BJ (cell line): ENCODE measurements at regions of chr1 and their contacts with region 1.

Region 1: GRCh38 chr1:109493805-109494539 is at the start of gene CYB561D1:
- DNase-seq: no peak
- H3K4me3 ChIP-seq: peak within 1 kb of the TSS; percentile 83
- H3K27me3 ChIP-seq: no peaks in the 10 kb centered on the region
- CTCF ChIP-seq: peak; percentile 87
- polyA plus RNA-seq, gene CYB561D1: 8.2 and 10.8 TPM in 2 replicates

Region 2: DNA sequence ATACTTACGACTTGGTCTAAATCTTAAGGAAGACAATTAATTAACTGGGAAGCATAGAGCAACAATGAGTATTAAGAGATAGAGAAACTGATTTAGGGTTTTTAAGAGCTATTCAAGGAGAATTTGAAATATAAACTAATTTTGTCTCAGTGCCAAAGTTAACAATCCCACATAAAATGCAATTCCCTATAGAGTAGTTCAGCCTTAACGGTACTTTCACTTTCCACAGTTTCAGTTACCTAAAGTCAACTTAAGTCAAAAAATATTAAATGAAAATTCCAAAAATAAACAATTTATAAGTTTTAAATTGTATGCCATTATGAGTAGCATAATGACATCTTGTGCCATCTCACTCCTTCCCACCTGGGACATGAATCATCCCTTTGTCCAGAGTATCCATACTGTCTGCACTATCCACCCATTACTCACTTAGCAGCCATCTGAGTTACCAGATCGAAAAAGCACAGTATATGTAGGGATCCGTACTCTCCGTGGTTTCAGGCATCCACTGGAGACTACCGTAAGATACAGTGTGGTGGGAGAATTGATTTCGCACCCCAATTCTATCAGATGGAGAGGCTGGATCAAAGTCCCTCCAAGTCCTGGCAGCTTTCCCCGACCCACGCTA is 285.0 kb before region 1 on chr1:
- CTCF ChIA-PET with region 1: no interaction called
- POLR2A ChIA-PET with region 1: no interaction called
- DNase-seq: no peak
- H3K4me3 ChIP-seq: no peak overlapping the region
- H3K27me3 ChIP-seq: no peaks in the 10 kb centered on the region
- CTCF ChIP-seq: no peak

Region 3: GRCh38 chr1:109426278-109427170 is 67.4 kb before region 1 on chr1 and contains the start of gene PSMA5:
- CTCF ChIA-PET with region 1: interaction called, 17 read pairs
- POLR2A ChIA-PET with region 1: interaction called, 26 read pairs
- DNase-seq: peak; percentile 98
- H3K4me3 ChIP-seq: peak within 1 kb of the TSS; percentile 77
- H3K27me3 ChIP-seq: no peaks in the 10 kb centered on the region
- CTCF ChIP-seq: no peak
- polyA plus RNA-seq, gene PSMA5: 151 and 226 TPM in 2 replicates

Region 4: DNA sequence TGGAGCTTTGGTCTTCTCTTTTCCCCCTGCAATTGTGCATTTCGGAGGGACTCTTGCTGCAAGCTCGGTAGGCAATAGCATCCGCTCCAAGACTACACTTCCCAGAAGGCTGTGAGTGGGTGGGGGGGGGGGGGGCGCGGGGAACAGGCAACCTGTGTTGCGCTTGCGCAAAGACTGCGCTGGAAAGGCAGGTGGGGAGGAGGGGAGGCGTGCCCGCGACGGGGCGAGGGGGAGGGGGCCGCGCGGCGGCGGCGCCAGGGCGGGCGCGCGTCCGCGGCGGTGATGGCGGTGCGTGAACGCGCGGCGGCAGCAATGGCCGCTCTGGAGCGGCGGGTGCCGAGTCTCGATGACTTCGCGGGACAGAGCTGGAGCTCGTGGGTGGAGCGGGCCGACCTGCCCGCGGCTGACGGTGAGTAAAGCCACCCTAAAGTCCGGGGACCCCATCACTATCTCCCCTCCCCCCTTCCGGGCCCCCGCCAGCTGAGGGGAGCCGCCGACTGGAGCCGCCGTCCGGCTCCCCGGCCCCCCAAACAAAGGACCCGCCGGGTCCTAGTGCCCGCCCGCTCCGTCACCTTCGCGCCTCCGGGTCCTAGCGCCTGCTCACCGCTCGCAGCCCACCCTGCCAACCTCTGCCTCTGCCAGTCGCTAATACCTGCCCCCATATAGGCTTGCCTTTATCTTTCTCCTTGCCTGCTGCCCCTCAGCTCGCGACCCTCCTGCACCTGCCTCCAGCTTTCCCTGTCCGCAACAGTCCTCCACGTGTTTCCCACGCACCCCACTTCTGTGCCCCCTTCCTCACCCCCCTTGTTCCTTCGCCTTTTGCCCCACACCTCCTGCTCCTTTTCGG is 10.1 kb before region 1 on chr1 and contains the start of gene ATXN7L2:
- CTCF ChIA-PET with region 1: interaction called, 33 read pairs
- POLR2A ChIA-PET with region 1: no interaction called
- DNase-seq: peak; percentile 47
- H3K4me3 ChIP-seq: peak within 1 kb of the TSS; percentile 65
- H3K27me3 ChIP-seq: no peaks in the 10 kb centered on the region
- CTCF ChIP-seq: no peak
- polyA plus RNA-seq, gene ATXN7L2: 5.7 and 8.7 TPM in 2 replicates

Region 5: DNA sequence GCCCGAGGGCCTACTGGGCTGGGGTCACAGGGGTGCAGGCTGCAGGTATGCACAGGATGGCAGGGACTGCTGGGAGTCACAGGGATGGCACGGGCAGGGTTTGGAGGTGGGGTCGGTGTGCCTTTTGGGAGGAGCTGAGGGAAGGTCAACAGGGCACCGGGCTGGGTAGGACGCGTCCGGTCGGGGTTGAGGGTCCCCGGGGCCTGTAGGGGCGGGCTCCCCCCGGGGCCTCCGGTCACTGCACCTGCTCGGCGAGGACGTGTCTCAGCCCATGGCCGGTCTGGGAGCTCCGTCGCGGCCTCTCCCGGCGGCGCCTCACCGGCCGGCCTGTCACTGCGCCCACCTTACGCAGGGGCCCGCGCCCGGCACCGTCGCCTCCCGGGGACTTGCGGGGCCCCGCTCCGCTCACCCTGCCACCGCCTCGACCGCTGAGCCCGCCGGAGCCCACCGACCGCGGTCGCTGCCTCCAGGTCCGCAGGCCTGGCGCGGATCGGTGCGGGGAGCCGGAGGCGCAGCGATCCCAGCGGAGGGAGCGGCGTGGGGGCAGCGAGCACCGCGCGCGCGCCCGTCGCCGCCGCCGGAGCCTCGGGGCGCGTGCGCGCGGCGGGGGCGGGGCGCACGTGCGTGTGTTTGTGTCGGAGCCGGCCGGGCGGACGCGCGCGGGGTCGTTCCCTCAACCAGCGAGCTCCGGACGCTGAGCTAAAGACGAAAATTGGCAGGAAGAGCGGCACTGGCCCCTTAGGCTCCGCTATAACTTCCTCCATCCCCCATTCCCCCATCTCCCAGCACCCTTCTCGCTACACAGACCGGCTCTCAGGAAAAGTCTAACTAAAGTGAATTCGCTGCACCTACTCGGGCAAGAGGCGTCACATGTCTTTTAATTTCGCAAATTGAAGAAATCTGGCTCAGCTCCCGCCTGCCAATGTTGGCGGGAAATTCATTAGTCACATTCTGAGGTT is 15.5 kb after region 1 on chr1 and contains the start of gene AMIGO1:
- CTCF ChIA-PET with region 1: interaction called, 42 read pairs
- POLR2A ChIA-PET with region 1: interaction called, 3 read pairs
- DNase-seq: no peak
- H3K4me3 ChIP-seq: peak within 1 kb of the TSS; percentile 60
- H3K27me3 ChIP-seq: no peaks in the 10 kb centered on the region
- CTCF ChIP-seq: no peak
- polyA plus RNA-seq, gene AMIGO1: 2.9 and 3.4 TPM in 2 replicates

Region 6: GRCh38 chr1:109516872-109517271 is 22.9 kb after region 1 on chr1:
- CTCF ChIA-PET with region 1: interaction called, 1,371 read pairs
- POLR2A ChIA-PET with region 1: no interaction called
- DNase-seq: peak; percentile 75
- H3K4me3 ChIP-seq: no peak overlapping the region
- H3K27me3 ChIP-seq: no peaks in the 10 kb centered on the region
- CTCF ChIP-seq: no peak

Region 7: DNA sequence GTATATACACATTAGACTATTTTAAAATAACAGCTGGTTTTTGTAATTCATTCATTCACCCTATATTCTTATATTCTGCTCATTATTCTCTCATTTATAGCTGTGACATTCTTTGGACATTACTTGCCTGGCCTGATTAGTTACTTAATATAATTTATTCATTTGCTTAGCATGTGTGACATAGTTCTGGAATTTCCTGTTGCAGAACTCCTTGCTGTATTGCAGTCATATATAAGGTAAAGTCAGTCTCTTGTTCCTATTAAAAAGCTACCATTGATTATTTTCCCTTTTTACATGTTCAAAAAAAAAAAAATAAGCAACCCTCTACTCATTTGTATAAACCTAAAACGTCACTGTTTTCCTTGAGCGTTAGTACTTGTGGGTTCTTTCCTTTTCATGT is 101.6 kb after region 1 on chr1:
- CTCF ChIA-PET with region 1: no interaction called
- POLR2A ChIA-PET with region 1: no interaction called
- DNase-seq: no peak
- H3K4me3 ChIP-seq: no peak overlapping the region
- H3K27me3 ChIP-seq: no peaks in the 10 kb centered on the region
- CTCF ChIP-seq: no peak